H1 (cell line): ENCODE measurements at regions of chr1 and their contacts with region 1.

Region 1: DNA sequence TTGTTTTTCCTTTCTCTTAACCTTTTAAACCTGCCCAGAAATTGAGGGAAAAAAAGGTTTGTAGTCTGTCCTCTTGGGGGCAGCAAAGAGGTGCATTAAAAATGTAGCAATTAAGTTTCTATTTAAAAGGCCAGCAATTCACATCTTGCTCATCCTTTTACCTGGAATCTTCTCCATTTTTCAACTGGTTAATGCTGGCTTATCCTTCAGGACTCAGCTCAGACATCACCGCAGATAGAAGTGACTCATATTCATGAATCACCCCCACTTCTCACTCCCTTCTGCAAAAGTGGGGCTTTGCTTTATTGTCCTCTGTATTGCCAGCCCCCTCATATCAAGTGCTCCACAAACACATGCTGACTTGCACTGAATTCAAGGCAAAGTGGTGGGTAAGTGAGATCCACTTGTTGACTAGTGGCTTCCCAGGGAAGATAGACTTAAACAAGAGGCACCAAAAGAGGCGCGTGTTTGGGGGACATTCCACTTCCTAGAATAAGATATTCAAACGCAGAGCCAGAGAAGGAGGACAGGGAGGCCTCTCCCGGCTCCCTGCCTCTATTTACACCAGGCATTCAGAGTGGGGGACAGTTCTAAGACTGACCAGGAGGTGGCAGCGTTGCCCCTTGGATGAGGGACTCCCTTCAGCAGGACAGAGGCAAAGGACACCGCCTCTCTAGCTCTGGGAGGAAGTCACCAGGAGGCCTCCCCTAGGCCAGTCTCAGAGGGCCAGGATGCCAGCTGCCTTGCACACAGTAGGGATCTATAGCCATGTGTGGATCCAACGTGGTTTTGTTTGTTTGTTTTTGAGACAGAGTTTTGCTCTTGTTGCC is 23.2 kb upstream of the ZNF648 start:
- DNase-seq: peak; percentile 86 to 98
- H3K4me3 ChIP-seq: no peak overlapping the region; a peak in 1 of 8 replicates
- H3K27ac ChIP-seq: peak overlapping the region; percentile 51; the same call in 1 of the 2 replicates
- H3K4me1 ChIP-seq: peaks cover 0 to 11% (median 4%) of the 10 kb centered on the region in 4 experiments; a peak in 4 of 7 replicates
- H3K27me3 ChIP-seq: no peaks in the 10 kb centered on the region
- CTCF ChIP-seq: peak; percentile 76 to 90 (median 89)
- EP300 ChIP-seq: no peak
- POLR2A ChIP-seq: no peak
- RAD21 ChIP-seq: peak; percentile 99 to 100

Region 2: GRCh38 chr1:181479137-181479745 is 605.5 kb before region 1 on chr1:
- CTCF ChIA-PET with region 1: interaction called, 18 read pairs
- POLR2A ChIA-PET with region 1: no interaction called
- DNase-seq: peak in 1 of 2 experiments; percentile 53
- H3K4me3 ChIP-seq: no peak overlapping the region
- H3K27ac ChIP-seq: no peak overlapping the region
- H3K4me1 ChIP-seq: peaks cover 2 to 14% (median 8%) of the 10 kb centered on the region in 4 experiments; a peak in 6 of 7 replicates
- H3K27me3 ChIP-seq: peaks cover 19 to 38% (median 34%) of the 10 kb centered on the region in 4 experiments
- CTCF ChIP-seq: peak; percentile 85 to 94 (median 86)
- EP300 ChIP-seq: no peak
- POLR2A ChIP-seq: no peak
- RAD21 ChIP-seq: peak; percentile 95 to 96

Region 3: GRCh38 chr1:182069028-182069466 is 15.7 kb before region 1 on chr1:
- CTCF ChIA-PET with region 1: interaction called, 53 read pairs
- POLR2A ChIA-PET with region 1: interaction called, 4 read pairs
- DNase-seq: peak; percentile 75 to 92
- H3K4me3 ChIP-seq: peak overlapping the region in 1 of 4 experiments; percentile 38; a peak in 2 of 8 replicates
- H3K27ac ChIP-seq: no peak overlapping the region
- H3K4me1 ChIP-seq: peaks cover 0 to 6% (median 0%) of the 10 kb centered on the region in 4 experiments; a peak in 2 of 7 replicates
- H3K27me3 ChIP-seq: peaks cover 0 to 7% (median 4%) of the 10 kb centered on the region in 4 experiments; a peak in 4 of 7 replicates
- CTCF ChIP-seq: peak; percentile 77 to 85 (median 84)
- EP300 ChIP-seq: no peak
- POLR2A ChIP-seq: no peak
- RAD21 ChIP-seq: peak; percentile 56 to 70

Region 4: DNA sequence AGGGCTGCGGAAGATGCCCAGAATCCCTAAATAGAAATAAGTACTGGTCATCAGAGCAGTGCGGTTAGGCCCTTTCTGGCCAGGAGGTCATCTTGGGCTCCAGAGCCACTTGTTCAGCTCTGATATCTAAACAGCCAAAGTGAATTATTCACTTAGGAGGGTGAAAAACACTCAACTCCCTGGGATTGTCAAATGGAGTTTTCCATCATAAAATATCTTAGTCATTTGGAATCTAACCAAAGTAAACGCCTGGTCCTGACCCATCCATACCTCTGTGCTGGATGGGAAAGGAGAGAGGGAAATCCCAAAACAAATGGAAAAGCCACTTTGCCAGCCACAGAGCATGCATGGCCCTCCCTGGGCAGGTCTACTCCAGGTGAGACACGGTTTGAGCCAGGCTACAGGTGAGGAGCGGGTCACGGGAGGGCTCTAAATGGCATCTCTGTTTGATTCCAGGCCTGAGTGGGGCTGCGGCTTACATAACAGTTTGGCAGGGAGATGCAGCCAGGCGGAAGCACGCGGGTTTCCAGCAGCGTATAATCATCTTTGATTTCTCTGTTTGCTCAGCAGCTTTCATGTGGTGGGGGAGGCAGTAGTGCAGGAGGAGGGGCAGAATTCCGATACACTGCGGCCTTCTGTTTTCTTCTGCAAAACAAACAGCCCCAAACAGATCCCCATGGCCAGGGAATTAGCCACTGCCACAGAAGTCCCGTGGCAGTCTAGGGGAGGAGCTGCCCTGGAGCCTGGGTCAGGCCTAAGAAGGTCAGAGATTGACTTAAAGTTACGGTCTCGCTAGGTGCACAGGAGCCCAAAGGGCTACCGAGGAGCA is 35.9 kb after region 1 on chr1:
- CTCF ChIA-PET with region 1: interaction called, 56 read pairs
- POLR2A ChIA-PET with region 1: no interaction called
- DNase-seq: peak in 1 of 2 experiments; percentile 39
- H3K4me3 ChIP-seq: no peak overlapping the region
- H3K27ac ChIP-seq: no peak overlapping the region
- H3K4me1 ChIP-seq: no peaks in the 10 kb centered on the region
- H3K27me3 ChIP-seq: no peaks in the 10 kb centered on the region
- CTCF ChIP-seq: no peak
- EP300 ChIP-seq: no peak
- POLR2A ChIP-seq: no peak
- RAD21 ChIP-seq: no peak

Region 5: DNA sequence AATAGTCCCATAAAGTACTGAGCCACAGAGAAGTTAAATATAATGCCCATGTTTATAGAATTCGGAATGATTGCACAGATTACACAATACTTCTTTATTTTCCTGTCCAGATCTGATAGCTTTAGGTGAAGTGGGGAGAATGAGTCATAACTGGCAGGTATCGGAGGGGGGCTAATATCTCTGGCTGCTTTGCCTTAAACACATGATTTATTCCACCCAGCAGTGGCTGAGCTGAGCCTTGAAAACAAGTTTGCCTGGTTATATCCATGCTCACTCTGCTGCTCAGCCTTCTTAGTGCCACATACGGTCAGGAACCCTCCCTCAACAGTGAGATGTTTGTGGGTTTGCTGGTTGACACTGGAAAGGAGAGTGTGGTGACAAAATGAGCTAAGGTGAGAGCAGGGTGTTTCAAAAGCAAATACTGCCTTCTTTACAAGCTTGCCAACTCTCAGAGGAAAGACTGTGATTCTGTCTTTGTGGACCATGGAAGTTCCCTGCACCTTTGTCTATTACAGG is 96.5 kb after region 1 on chr1:
- CTCF ChIA-PET with region 1: interaction called, 13 read pairs
- POLR2A ChIA-PET with region 1: no interaction called
- DNase-seq: no peak
- H3K4me3 ChIP-seq: no peak overlapping the region
- H3K27ac ChIP-seq: no peak overlapping the region
- H3K4me1 ChIP-seq: no peaks in the 10 kb centered on the region
- H3K27me3 ChIP-seq: no peaks in the 10 kb centered on the region
- CTCF ChIP-seq: no peak
- EP300 ChIP-seq: no peak
- POLR2A ChIP-seq: no peak
- RAD21 ChIP-seq: no peak

Region 6: GRCh38 chr1:182215764-182216163 is 131.1 kb after region 1 on chr1:
- CTCF ChIA-PET with region 1: no interaction called
- POLR2A ChIA-PET with region 1: no interaction called
- DNase-seq: no peak
- H3K4me3 ChIP-seq: no peak overlapping the region
- H3K27ac ChIP-seq: no peak overlapping the region
- H3K4me1 ChIP-seq: no peaks in the 10 kb centered on the region
- H3K27me3 ChIP-seq: no peaks in the 10 kb centered on the region
- CTCF ChIP-seq: no peak
- EP300 ChIP-seq: no peak
- POLR2A ChIP-seq: no peak
- RAD21 ChIP-seq: no peak

Region 7: DNA sequence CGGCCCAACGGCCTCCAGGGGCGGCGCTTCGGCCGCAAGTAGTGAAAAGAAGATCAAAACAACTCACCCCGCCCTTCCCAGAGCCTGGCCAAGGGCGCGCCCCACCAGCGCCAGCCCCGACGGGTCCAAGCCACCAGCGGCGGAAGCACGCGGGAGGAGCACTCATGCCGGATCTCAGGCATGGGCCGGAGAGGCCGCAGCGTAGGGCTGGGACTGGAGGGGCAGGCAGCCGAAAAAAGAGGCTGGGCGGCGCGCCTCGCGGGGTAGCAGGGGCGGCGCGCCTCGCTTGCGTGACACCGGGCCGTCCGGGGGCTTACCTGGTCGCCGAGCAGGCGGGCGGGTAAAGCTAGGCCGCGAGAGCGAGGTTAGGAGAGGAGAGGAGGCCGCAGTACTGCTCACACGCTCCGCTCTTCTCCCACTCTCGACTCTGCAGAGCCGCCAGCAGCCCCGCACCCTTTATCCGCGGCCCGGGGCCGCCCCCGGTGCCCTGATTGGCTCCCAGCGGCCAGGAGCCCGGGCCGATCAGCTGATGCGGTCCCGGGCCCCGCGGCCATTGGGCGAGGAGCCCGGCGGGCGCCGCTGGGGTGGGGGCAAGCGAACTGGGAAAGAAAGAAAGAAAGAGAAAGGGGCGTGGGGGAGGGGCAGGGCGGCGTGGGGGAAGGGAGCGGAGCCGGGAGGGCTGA is 306.8 kb after region 1 on chr1 and contains the start of gene GLUL:
- CTCF ChIA-PET with region 1: interaction called, 88 read pairs
- POLR2A ChIA-PET with region 1: interaction called, 13 read pairs
- DNase-seq: peak; percentile 89 to 94
- H3K4me3 ChIP-seq: peak within 1 kb of the TSS; percentile 68 to 99 (median 96)
- H3K27ac ChIP-seq: peak within 1 kb of the TSS; percentile 97
- H3K4me1 ChIP-seq: peaks cover 4 to 12% (median 8%) of the 10 kb centered on the region in 4 experiments; a peak in 5 of 7 replicates
- H3K27me3 ChIP-seq: no peaks in the 10 kb centered on the region; a peak in 1 of 7 replicates
- CTCF ChIP-seq: no peak
- EP300 ChIP-seq: no peak
- POLR2A ChIP-seq: peak; percentile 99
- RAD21 ChIP-seq: no peak
- total RNA-seq, gene GLUL: 453 and 457 TPM in 2 replicates

Region 8: GRCh38 chr1:182404781-182405180 is 320.1 kb after region 1 on chr1:
- CTCF ChIA-PET with region 1: interaction called, 25 read pairs
- POLR2A ChIA-PET with region 1: no interaction called
- DNase-seq: no peak
- H3K4me3 ChIP-seq: no peak overlapping the region
- H3K27ac ChIP-seq: no peak overlapping the region
- H3K4me1 ChIP-seq: peaks cover 0 to 5% (median 0%) of the 10 kb centered on the region in 4 experiments; a peak in 1 of 7 replicates
- H3K27me3 ChIP-seq: no peaks in the 10 kb centered on the region
- CTCF ChIP-seq: peak; percentile 25 to 65 (median 42); a peak in 3 of 4 replicates
- EP300 ChIP-seq: no peak
- POLR2A ChIP-seq: no peak
- RAD21 ChIP-seq: peak; percentile 36 to 43; a peak in 3 of 4 replicates